Activated CD4-positive, alpha-beta memory T cell treated with anti-CD3 and anti-CD28 coated beads for 36 hours (primary cell): ENCODE measurements at regions of chr20 and their contacts with region 1.

Region 1: GRCh38 chr20:46363800-46364634 is 42.4 kb downstream of the ELMO2 start:
- DNase-seq: peak; percentile 91
- H3K4me3 Mint-ChIP-seq: peak overlapping the region; percentile 94
- H3K27ac Mint-ChIP-seq: peak overlapping the region; percentile 94
- H3K4me1 Mint-ChIP-seq: peaks cover 81% of the 10 kb centered on the region
- H3K27me3 Mint-ChIP-seq: no peaks in the 10 kb centered on the region

Region 2: DNA sequence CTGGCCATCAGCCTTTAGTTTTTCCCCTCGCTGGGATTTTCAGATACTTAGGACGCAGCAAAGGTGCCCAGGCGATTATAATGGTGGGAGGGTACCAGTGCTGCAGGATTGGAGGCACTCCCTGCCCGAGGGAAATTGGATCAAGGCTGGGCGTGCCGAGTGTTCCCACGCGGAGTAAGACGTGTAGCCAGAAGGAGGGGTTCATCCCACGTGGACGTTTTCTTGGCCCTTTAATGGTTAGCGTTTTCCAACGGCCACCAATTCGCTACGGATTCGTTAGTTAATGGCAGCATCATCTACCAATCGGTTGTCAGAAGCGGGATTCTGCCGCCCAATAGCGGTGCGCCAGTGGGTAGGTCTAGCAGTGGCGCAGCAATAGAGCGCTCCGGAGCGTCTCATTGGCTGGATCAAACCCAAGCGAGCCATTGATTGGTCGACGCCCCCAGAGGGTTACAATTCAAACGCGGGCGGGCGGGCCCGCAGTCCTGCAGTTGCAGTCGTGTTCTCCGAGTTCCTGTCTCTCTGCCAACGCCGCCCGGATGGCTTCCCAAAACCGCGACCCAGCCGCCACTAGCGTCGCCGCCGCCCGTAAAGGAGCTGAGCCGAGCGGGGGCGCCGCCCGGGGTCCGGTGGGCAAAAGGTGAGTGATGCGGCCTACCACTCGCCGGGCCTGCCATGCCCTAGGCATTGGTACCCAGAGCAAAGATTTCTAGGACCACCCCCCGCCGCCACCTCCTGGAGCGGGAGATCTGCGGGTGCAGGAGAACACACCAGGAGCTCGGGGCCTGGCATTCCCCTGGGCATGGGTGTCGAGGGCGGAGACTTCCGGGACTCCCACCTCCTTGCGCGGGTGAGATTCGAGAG is 551.6 kb before region 1 on chr20 and contains the start of gene UBE2C:
- CTCF ChIA-PET with region 1: no interaction called
- POLR2A ChIA-PET with region 1: no interaction called
- intact Hi-C with region 1: loop called (anchors 10 kb)
- DNase-seq: peak; percentile 98
- H3K4me3 Mint-ChIP-seq: peak within 1 kb of the TSS; percentile 91
- H3K27ac Mint-ChIP-seq: peak within 1 kb of the TSS; percentile 68
- H3K4me1 Mint-ChIP-seq: peaks cover 13% of the 10 kb centered on the region
- H3K27me3 Mint-ChIP-seq: no peaks in the 10 kb centered on the region
- total RNA-seq, gene UBE2C: 192 to 196 TPM

Region 3: GRCh38 chr20:46349035-46349741 is 14.8 kb before region 1 on chr20:
- CTCF ChIA-PET with region 1: interaction called, 11 read pairs
- POLR2A ChIA-PET with region 1: no interaction called
- intact Hi-C with region 1: no loop called
- DNase-seq: peak; percentile 65
- H3K4me3 Mint-ChIP-seq: no peak overlapping the region
- H3K27ac Mint-ChIP-seq: no peak overlapping the region
- H3K4me1 Mint-ChIP-seq: peaks cover 23% of the 10 kb centered on the region
- H3K27me3 Mint-ChIP-seq: no peaks in the 10 kb centered on the region

Region 4: DNA sequence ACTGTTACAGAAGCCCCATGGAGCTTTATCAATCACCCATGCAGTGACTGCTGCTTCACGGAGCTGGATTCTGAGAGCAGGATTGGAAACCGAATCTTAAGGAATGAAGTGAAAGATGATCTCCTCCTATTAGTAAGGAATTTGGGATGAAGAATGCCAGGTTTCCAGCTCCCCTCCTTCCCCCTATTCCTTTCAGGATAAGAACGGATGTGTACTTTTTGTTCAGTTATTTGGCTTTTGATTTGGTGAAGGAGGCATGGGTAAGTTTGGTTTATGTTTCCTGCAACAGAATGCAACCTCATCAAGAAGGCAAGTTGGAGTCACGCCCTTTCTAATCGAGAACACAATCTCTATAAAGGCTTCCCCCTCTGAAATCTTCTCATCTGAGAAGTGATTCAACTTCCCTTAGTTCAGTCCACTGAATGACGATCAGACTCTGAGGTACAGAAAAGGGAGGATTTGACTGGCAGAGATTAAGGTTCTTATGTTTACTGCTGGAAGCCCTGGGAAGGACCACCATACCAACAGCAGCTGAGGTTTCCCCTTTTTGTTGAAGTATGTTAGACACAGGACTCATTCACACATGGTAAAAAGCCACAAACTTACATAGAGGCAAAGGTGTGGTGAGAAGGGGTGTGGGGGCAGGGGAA is 36.9 kb after region 1 on chr20:
- CTCF ChIA-PET with region 1: interaction called, 8 read pairs
- POLR2A ChIA-PET with region 1: interaction called, 20 read pairs
- intact Hi-C with region 1: loop called (anchors 1 kb)
- DNase-seq: peak; percentile 48
- H3K4me3 Mint-ChIP-seq: peak overlapping the region; percentile 54
- H3K27ac Mint-ChIP-seq: peak overlapping the region; percentile 85
- H3K4me1 Mint-ChIP-seq: peaks cover 65% of the 10 kb centered on the region
- H3K27me3 Mint-ChIP-seq: no peaks in the 10 kb centered on the region

Region 5: DNA sequence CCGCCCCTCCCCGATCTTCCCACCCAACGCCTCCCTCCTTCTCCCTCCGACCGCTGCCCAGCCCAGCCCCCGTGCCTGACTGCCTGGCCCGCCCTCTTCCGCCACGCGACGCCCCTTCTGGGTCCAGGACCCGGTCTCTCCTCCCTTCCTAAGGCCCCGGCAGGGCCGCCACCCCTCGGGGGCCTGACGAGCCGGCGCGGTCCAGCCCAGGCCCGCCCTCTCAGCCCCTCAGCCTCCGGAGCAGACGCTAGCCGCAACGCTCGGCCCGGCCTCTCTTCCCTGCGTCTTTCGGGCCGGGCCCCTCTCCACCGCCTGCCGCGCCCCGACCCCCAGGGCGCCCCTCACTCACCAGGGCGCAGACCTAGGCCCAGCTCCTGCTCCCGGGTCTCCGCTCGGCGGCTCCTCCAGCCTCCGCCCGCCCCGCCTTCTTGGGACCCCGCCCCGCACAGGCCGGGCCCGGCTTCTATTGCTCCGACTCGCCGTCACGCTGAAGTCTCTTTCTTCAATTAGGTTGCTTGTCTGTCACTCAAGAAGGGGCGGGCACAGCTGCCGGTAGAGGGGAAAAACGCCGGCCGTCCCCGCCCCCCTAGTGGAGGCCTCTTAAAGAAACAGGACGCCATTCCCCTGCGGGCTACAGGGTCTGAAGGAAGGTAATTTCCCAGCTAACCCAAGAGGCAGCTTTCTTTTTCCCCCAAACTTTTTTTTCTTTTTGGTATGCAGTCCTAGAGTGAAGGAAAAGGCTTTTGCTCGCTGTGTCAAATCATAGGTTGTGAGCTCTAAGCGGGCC is 42.4 kb after region 1 on chr20 and contains the start of gene ELMO2:
- CTCF ChIA-PET with region 1: interaction called, 8 read pairs
- POLR2A ChIA-PET with region 1: interaction called, 20 read pairs
- intact Hi-C with region 1: loop called (anchors 1 kb)
- DNase-seq: peak; percentile 98
- H3K4me3 Mint-ChIP-seq: peak within 1 kb of the TSS; percentile 90
- H3K27ac Mint-ChIP-seq: peak within 1 kb of the TSS; percentile 92
- H3K4me1 Mint-ChIP-seq: peaks cover 63% of the 10 kb centered on the region
- H3K27me3 Mint-ChIP-seq: no peaks in the 10 kb centered on the region
- total RNA-seq, gene ELMO2: 57.4 to 64.1 TPM